K562 (cell line): ENCODE measurements at regions of chr15 and their contacts with region 1.

Region 1: DNA sequence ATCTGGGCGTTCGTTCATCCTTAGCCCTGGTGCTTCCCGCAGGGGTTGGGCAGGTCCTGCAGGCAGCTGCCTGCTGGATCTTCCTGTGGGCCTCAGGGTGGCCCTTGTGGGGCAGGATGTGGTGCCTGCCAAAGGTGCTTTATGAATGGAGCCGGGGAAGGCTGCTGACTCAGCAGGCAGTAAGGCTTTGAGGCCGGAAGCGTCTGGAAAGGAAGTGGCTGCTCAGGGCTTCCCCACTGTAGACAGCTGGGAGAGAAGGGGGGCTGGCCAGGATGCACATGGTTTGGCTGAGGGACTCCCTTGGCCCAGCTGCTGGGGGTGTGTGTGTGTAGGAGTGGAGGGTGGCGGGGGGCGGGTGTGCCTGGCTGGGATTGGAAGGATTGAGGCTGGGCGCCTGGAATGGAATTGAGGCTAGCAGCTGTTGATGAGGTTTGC is 12.9 kb downstream of the CD276 start:
- DNase-seq: peak; percentile 21 to 37 (median 26)
- ATAC-seq: peak; percentile 64
- H3K4me3 ChIP-seq: no peak overlapping the region
- H3K27ac ChIP-seq: no peak overlapping the region
- H3K4me1 ChIP-seq: peaks cover 0 to 7% of the 10 kb centered on the region in 2 experiments; a peak in 1 of 5 replicates
- H3K27me3 ChIP-seq: peaks cover 0 to 14% of the 10 kb centered on the region in 2 experiments; a peak in 3 of 5 replicates
- CTCF ChIP-seq: no peak
- EP300 ChIP-seq: no peak
- POLR2A ChIP-seq: no peak
- RAD21 ChIP-seq: no peak

Region 2: DNA sequence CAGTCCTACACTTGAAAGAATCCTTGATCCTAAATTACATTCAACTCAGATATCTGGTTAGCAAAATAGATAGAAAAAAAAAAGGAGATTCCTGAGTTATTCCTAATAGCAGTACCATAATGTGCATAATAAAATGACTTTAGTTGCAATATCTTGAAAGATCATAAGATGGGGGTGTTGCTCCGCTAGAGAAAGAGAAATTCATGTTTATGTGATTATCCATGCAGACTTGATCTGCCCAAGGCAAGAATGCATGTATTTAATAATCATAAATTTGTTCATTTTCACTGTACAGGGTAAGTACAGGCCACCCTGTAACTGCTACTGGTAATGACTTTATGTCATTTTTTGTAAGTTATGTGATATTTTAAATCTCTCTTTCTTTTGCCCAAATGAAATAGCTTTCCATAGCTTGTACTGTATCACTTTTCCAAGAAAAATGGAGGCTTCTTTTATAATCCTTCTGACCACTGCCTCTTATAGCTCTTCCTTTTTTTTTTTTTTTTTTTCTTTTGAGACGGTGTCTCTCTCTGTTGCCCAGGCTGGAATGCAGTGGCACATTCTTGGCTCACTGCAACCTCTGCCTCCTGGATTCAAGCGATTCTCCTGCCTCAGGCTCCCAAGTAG is 412.8 kb before region 1 on chr15:
- CTCF ChIA-PET with region 1: interaction called, 7 read pairs
- POLR2A ChIA-PET with region 1: interaction called, 3 read pairs
- in situ Hi-C with region 1: no loop called
- intact Hi-C with region 1: loop called (anchors 1 kb)
- DNase-seq: peak in 1 of 4 experiments; percentile 21
- ATAC-seq: 0 out of 3 replicates have a peak, but pooled peaks have one; percentile 48
- H3K4me3 ChIP-seq: no peak overlapping the region
- H3K27ac ChIP-seq: no peak overlapping the region
- H3K4me1 ChIP-seq: no peaks in the 10 kb centered on the region
- H3K27me3 ChIP-seq: peaks cover 10 to 14% of the 10 kb centered on the region in 2 experiments; a peak in 4 of 5 replicates
- CTCF ChIP-seq: peak; percentile 32 to 70 (median 32); a peak in 3 of 6 replicates
- EP300 ChIP-seq: no peak
- POLR2A ChIP-seq: no peak
- RAD21 ChIP-seq: peak; percentile 41 to 63

Region 3: DNA sequence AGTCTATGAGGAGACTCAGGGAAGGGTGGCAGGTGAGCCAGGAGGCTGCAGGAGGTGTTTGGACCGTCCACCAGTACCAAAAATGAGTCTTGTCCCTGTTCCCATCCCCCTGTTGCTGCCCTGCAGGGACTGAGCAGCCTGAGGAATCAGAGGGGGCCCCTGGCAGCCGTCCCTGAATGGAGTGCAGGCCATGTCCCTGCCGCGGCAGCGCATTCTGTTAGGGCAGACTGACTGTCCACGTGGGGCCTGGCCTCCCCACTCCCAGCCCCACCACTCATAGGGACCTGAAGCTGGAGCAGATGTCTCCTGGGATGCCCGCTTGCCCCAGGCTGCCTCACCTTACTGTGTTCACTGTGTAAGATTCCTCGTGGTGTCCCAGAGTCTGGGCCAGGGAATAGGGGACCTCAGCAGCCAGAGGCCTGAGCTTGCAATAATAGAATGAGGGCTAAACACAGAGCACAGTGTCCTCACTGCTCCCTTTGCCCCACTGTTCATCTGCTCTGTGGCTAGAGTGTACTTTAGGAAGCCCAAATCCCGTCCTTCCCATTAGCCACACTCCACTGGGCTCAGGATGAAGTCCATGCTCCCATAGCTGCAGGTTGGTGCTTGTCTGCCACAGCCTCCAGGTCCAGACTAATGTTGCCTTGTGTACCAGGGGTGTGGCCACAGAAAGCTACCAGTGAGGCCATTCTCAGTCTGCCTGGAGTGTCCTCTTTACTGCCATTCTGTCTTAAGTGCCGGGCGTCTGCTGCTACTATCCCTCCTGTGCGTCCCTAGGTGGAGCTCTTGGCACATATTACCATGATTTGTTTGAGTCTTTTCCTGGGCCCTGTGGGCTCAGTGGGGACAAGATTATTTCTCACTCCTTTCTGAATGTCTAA is 391.5 kb before region 1 on chr15:
- CTCF ChIA-PET with region 1: interaction called, 8 read pairs
- POLR2A ChIA-PET with region 1: no interaction called
- in situ Hi-C with region 1: no loop called
- intact Hi-C with region 1: loop called (anchors 5 kb)
- DNase-seq: peak; percentile 26 to 74 (median 46)
- ATAC-seq: peak; percentile 93
- H3K4me3 ChIP-seq: no peak overlapping the region
- H3K27ac ChIP-seq: no peak overlapping the region
- H3K4me1 ChIP-seq: no peaks in the 10 kb centered on the region; a peak in 1 of 5 replicates
- H3K27me3 ChIP-seq: peaks cover 24 to 40% of the 10 kb centered on the region in 2 experiments; a peak in 4 of 5 replicates
- CTCF ChIP-seq: peak; percentile 74 to 82 (median 77)
- EP300 ChIP-seq: no peak
- POLR2A ChIP-seq: no peak
- RAD21 ChIP-seq: peak; percentile 61 to 81

Region 4: DNA sequence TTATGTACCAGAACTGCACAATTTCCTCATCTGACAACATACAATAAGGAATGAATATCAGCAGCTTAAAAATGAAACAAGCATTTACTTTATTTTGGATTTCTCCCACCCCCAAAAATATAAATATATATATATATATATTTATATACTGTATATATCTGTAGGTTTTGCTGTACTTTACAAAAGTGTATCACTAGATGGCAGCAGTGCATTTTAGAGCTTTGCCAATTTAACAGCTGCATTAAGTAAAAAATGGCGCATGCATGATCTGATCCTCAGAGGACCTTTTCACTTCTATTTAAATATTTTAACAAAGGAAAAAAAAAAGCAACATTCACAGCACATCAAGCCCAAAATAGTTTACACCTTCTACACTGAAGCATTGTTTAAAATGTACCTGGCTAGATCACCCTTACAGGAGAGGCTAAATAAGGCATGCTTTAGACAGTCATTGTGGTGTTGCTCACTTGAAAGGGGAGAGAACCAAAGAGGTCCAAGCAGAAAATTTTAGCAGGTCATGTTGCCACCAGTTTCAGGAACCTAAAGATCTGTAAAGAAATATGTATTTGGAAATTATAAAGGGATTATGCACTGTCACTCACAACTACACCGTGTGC is 136.4 kb before region 1 on chr15:
- CTCF ChIA-PET with region 1: interaction called, 18 read pairs
- POLR2A ChIA-PET with region 1: interaction called, 4 read pairs
- in situ Hi-C with region 1: loop called (anchors 5 kb)
- intact Hi-C with region 1: loop called (anchors 1 kb)
- DNase-seq: peak in 2 of 4 experiments; percentile 24 to 67
- ATAC-seq: peak; percentile 82
- H3K4me3 ChIP-seq: no peak overlapping the region
- H3K27ac ChIP-seq: no peak overlapping the region
- H3K4me1 ChIP-seq: peaks cover 0 to 11% of the 10 kb centered on the region in 2 experiments; a peak in 3 of 5 replicates
- H3K27me3 ChIP-seq: no peaks in the 10 kb centered on the region
- CTCF ChIP-seq: peak; percentile 30 to 69 (median 51); a peak in 3 of 6 replicates
- EP300 ChIP-seq: no peak
- POLR2A ChIP-seq: no peak
- RAD21 ChIP-seq: peak; percentile 49 to 65

Region 5: GRCh38 chr15:73633111-73633990 is 63.7 kb before region 1 on chr15 and contains the start of gene NPTN:
- CTCF ChIA-PET with region 1: interaction called, 19 read pairs
- POLR2A ChIA-PET with region 1: interaction called, 3 read pairs
- in situ Hi-C with region 1: no loop called
- intact Hi-C with region 1: loop called (anchors 1 kb)
- DNase-seq: peak; percentile 95 to 98 (median 96)
- ATAC-seq: peak; percentile 97
- H3K4me3 ChIP-seq: peak within 1 kb of the TSS; percentile 70
- H3K27ac ChIP-seq: peak within 1 kb of the TSS; percentile 69
- H3K4me1 ChIP-seq: peaks cover 19 to 25% of the 10 kb centered on the region in 2 experiments
- H3K27me3 ChIP-seq: no peaks in the 10 kb centered on the region
- CTCF ChIP-seq: no peak
- EP300 ChIP-seq: no peak
- POLR2A ChIP-seq: peak; percentile 91
- RAD21 ChIP-seq: no peak
- polyA plus RNA-seq, gene NPTN: 9.6 to 10.1 TPM

Region 6: DNA sequence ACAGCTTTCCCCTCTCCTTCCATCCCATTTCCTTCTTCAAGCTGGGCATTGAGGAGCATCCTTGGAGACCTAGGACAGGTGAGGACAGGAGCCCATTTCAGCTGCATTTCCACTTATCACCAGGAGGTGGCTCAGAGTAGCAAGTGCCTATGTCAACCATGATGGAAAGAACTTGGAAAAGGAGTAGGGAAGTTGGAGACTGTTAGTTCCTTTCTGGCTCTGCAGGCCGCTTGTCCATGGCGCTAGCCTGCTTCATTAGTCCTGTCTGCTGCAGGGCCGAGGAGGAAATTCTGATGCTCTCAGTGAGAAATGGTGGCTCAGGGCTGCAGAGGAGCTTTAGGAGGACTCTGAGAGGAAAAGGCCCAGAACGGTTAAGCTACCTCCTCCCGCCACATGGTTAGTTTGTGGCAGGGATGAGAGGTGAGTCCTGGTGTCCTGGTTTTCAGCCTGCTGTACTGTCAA is 19.9 kb before region 1 on chr15:
- CTCF ChIA-PET with region 1: interaction called, 36 read pairs
- POLR2A ChIA-PET with region 1: interaction called, 3 read pairs
- in situ Hi-C with region 1: no loop called
- intact Hi-C with region 1: loop called (anchors 1 kb)
- DNase-seq: peak; percentile 47 to 67 (median 53)
- ATAC-seq: peak; percentile 87
- H3K4me3 ChIP-seq: no peak overlapping the region
- H3K27ac ChIP-seq: no peak overlapping the region
- H3K4me1 ChIP-seq: no peaks in the 10 kb centered on the region
- H3K27me3 ChIP-seq: peaks cover 6 to 31% of the 10 kb centered on the region in 2 experiments; a peak in 3 of 5 replicates
- CTCF ChIP-seq: peak; percentile 63 to 86 (median 81)
- EP300 ChIP-seq: no peak
- POLR2A ChIP-seq: no peak
- RAD21 ChIP-seq: peak; percentile 49 to 80; a peak in 3 of 4 replicates

Region 7: GRCh38 chr15:73753250-73754130 is 56.4 kb after region 1 on chr15 and contains the start of gene INSYN1:
- CTCF ChIA-PET with region 1: no interaction called
- POLR2A ChIA-PET with region 1: no interaction called
- in situ Hi-C with region 1: no loop called
- intact Hi-C with region 1: no loop called
- DNase-seq: no peak
- ATAC-seq: no peak; the same call in 2 of the 3 replicates
- H3K4me3 ChIP-seq: no peak within 1 kb of the TSS
- H3K27ac ChIP-seq: no peak within 1 kb of the TSS
- H3K4me1 ChIP-seq: peaks cover 0 to 8% of the 10 kb centered on the region in 2 experiments; a peak in 2 of 5 replicates
- H3K27me3 ChIP-seq: peaks cover 14 to 52% of the 10 kb centered on the region in 2 experiments; a peak in 4 of 5 replicates
- CTCF ChIP-seq: no peak
- EP300 ChIP-seq: no peak
- POLR2A ChIP-seq: no peak
- RAD21 ChIP-seq: no peak
- polyA plus RNA-seq, gene INSYN1: not detected